Ascending aorta (tissue), 2 donors: ENCODE measurements at regions of chr10 and their contacts with region 1.

Region 1: GRCh38 chr10:31031558-31032257 is at the start of gene ZNF438:
- DNase-seq: peak; percentile 80 to 96
- H3K4me3 ChIP-seq: peak within 1 kb of the TSS; percentile 69 to 71
- H3K27ac ChIP-seq: peak within 1 kb of the TSS; percentile 98 to 99
- H3K4me1 ChIP-seq: peaks cover 6 to 25% of the 10 kb centered on the region in 2 donors
- H3K27me3 ChIP-seq: no peaks in the 10 kb centered on the region
- CTCF ChIP-seq: peak; percentile 58 to 89 (median 65)
- total RNA-seq, gene ZNF438: 1.7 TPM

Region 2: DNA sequence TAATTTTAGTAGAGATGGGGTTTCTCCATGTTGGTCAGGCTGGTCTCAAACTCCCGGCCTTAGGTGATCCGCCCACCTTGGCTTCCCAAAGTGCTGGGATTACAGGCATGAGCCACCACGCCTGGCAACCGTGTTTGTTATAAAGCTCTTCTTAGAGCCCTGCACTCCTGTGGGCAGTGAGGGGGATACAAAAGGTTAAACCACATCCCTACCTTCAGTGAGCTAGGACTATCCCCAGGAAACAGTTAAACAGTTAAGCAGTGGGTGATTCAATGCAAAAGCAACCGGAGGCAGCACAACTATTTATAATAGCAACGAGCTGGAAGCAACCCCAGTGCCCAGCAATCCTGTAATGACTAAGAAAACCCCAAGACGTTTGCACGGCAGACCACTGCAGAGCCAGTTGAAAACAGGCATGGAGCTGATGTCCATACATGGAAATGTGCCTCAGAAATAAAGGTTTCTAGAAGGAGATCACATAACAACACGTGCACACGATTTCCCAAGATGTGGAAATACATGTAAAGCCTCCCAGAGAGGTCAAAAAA is 294.9 kb before region 1 on chr10:
- intact Hi-C with region 1: loop called (anchors 5 kb)
- DNase-seq: peak; percentile 58 to 93
- H3K4me3 ChIP-seq: no peak overlapping the region
- H3K27ac ChIP-seq: peak overlapping the region; percentile 63 to 67
- H3K4me1 ChIP-seq: peaks cover 10 to 12% of the 10 kb centered on the region in 2 donors
- H3K27me3 ChIP-seq: no peaks in the 10 kb centered on the region
- CTCF ChIP-seq: no peak

Region 3: GRCh38 chr10:30812018-30812851 is 219.5 kb before region 1 on chr10:
- intact Hi-C with region 1: loop called (anchors 2 kb)
- DNase-seq: peak in 1 of 2 donors; percentile 79
- H3K4me3 ChIP-seq: peak overlapping the region; percentile 0 to 54
- H3K27ac ChIP-seq: peak overlapping the region; percentile 74 to 93
- H3K4me1 ChIP-seq: peaks cover 8 to 35% of the 10 kb centered on the region in 2 donors
- H3K27me3 ChIP-seq: no peaks in the 10 kb centered on the region
- CTCF ChIP-seq: no peak

Region 4: GRCh38 chr10:30980951-30981616 is 50.6 kb before region 1 on chr10:
- intact Hi-C with region 1: loop called (anchors 5 kb)
- DNase-seq: peak; percentile 39 to 87
- H3K4me3 ChIP-seq: no peak overlapping the region
- H3K27ac ChIP-seq: peak overlapping the region; percentile 54 to 68
- H3K4me1 ChIP-seq: peaks cover 7 to 34% of the 10 kb centered on the region in 2 donors
- H3K27me3 ChIP-seq: no peaks in the 10 kb centered on the region
- CTCF ChIP-seq: no peak

Region 5: GRCh38 chr10:31133628-31134302 is 102.1 kb after region 1 on chr10:
- intact Hi-C with region 1: loop called (anchors 2 kb)
- DNase-seq: peak; percentile 26 to 89
- H3K4me3 ChIP-seq: peak overlapping the region; percentile 61 to 74
- H3K27ac ChIP-seq: peak overlapping the region; percentile 95 to 96
- H3K4me1 ChIP-seq: peaks cover 3 to 22% of the 10 kb centered on the region in 2 donors
- H3K27me3 ChIP-seq: no peaks in the 10 kb centered on the region
- CTCF ChIP-seq: no peak

Region 6: DNA sequence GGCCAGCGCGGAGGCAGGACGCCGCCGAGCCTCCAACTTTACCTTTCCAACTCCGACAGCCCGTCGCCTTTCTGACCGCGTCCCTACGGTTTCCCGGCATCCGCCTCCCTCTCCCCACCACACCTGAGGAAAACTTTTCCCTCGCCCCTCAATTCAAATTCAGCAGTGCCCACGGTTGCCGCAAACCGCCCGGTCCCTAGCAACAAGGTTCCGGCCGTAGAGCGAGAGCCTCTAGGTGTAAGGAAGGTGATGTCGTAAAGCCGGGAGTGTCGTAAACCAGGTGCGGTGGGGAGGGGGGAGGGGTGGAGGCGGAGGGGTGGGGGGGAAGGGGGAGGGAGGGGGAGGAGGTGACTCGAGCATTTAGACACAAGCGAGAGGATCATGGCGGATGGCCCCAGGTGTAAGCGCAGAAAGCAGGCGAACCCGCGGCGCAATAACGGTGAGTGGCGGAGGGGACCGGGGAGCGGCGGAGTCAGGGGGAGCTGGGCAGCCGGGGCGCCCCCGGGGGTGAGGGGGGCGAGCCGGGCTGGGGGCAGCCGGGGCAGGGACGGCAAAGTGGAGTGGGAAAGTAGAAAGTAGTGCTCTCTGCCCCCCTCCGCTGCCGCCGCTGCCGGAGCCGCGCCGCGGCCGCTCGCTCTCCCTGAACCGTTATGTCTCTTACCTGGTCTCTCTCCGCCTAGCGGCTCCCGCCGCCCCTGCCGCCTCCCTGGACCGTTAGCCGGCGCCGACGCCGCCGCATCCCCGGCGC is 287.3 kb after region 1 on chr10 and contains the start of gene ZEB1:
- intact Hi-C with region 1: loop called (anchors 1 kb)
- DNase-seq: peak; percentile 72 to 94
- H3K4me3 ChIP-seq: peak within 1 kb of the TSS; percentile 96 to 98
- H3K27ac ChIP-seq: peak within 1 kb of the TSS; percentile 95 to 98
- H3K4me1 ChIP-seq: peaks cover 0 to 9% of the 10 kb centered on the region in 2 donors
- H3K27me3 ChIP-seq: no peaks in the 10 kb centered on the region
- CTCF ChIP-seq: peak; percentile 47 to 73 (median 57)
- total RNA-seq, gene ZEB1: 77.3 TPM

Region 7: DNA sequence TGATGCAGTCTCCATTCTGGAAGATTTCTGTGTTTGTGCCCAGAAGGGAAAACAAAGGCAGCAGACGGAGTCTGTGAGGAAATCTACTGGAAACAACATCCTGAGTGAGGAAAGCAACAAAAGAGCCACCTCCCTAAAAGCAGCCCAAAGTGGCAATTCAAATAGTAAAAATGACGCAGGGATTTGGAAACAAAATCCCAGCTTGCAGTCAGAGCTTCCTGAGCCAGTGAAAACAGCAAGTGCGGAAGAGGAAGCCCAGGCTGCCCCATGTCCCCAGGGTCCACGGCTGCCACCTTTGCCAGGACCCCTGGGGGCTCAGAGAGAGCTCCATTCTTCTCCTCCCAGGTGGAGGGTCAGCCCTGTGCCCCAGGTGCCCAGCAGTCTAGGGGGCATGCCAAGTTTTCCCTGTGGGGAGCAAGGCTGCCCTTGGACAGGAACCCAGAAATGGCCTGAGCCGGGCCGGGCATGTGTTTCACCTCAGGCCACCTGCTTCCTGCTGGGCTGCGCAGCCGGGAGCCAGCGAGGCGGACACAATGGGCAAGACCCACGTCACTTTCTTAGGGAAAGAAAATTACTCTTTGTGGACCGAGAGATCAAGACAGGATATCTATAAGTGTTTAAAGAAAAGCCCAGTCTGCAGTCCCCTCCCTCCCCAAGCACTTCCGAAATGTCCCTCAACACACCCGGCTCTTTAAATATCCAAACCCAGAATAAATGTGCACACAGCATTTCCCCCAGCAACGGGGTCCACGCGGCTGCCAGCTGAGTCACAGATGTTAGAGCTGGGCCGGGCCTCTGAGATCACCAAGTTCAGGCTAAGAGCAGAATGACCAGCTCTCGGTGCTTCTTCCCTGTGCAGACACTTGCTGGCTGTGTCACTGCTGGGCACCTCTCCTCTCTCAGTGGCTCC is 665.8 kb after region 1 on chr10:
- intact Hi-C with region 1: loop called (anchors 5 kb)
- DNase-seq: peak; percentile 90 to 98
- H3K4me3 ChIP-seq: peak overlapping the region; percentile 38 to 56
- H3K27ac ChIP-seq: peak overlapping the region; percentile 98 to 99
- H3K4me1 ChIP-seq: peaks cover 13 to 52% of the 10 kb centered on the region in 2 donors
- H3K27me3 ChIP-seq: no peaks in the 10 kb centered on the region
- CTCF ChIP-seq: no peak